ENCODE measurements at regions of chr15 and their contacts with region 1.

Region 1: DNA sequence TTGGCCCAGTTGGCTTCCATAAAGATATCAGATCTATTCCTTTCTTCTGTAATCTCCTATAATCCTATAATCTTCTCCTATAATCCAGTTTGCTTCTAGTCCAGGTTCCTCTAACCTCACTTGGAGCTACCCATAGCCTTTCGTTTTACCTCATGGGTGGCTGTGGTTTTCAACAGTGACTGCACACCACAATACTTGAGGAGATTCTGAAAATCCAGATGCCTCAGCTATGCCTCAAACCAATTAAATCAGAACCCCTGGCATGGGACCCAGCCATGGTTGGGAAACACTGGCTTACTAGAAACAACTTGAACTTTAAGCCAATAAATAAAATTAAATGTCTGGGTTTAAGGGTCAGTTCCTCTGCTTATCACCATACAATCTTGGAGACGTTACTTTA is 86.1 kb upstream of the NTRK3 start:
- DNase-seq: no peak
- H3K4me3 ChIP-seq: no peak overlapping the region
- H3K27ac ChIP-seq: no peak overlapping the region
- H3K4me1 ChIP-seq: no peaks in the 10 kb centered on the region
- H3K27me3 ChIP-seq: no peaks in the 10 kb centered on the region
- CTCF ChIP-seq: no peak
- POLR2A ChIP-seq: no peak

Region 2: GRCh38 chr15:88012233-88012632 is 330.4 kb before region 1 on chr15:
- intact Hi-C with region 1: loop called (anchors 5 kb)
- DNase-seq: no peak
- H3K4me3 ChIP-seq: no peak overlapping the region
- H3K27ac ChIP-seq: no peak overlapping the region
- H3K4me1 ChIP-seq: no peaks in the 10 kb centered on the region
- H3K27me3 ChIP-seq: no peaks in the 10 kb centered on the region
- CTCF ChIP-seq: no peak
- POLR2A ChIP-seq: no peak

Region 3: GRCh38 chr15:88139936-88140335 is 202.7 kb before region 1 on chr15:
- intact Hi-C with region 1: no loop called
- DNase-seq: no peak
- H3K4me3 ChIP-seq: no peak overlapping the region
- H3K27ac ChIP-seq: no peak overlapping the region
- H3K4me1 ChIP-seq: no peaks in the 10 kb centered on the region
- H3K27me3 ChIP-seq: no peaks in the 10 kb centered on the region
- CTCF ChIP-seq: no peak
- POLR2A ChIP-seq: no peak